Heart right ventricle (tissue), 16 donors: ENCODE measurements at regions of chr11 and their contacts with region 1.

Region 1: DNA sequence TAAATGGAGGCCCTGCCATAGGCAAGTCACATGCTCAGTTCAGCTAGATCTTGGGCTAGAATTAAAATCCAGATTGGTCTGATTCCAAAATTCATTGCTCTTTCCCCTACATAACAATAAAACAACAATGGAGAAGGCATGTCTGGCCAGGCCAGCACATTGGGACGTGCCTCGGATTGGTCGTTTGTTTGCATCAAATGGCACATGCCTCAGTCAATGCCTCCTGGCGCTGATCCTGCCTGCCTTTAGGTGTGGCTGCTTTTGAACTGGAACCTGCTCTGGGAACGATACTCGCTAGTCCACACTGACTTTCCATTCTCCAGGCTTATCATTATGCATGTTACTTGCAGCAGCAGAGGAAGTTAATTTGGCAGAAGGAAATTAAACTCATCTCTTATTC is 322.1 kb downstream of the NELL1 start:
- DNase-seq: no peak
- ATAC-seq: no peak
- H3K4me3 ChIP-seq: no peak overlapping the region
- H3K27ac ChIP-seq: no peak overlapping the region
- H3K4me1 ChIP-seq: no peaks in the 10 kb centered on the region
- H3K27me3 ChIP-seq: peaks cover 0 to 5% (median 0%) of the 10 kb centered on the region in 7 donors
- CTCF ChIP-seq: no peak

Region 2: GRCh38 chr11:20327377-20327935 is 664.0 kb before region 1 on chr11:
- intact Hi-C with region 1: no loop called
- DNase-seq: no peak
- ATAC-seq: no peak
- H3K4me3 ChIP-seq: no peak overlapping the region
- H3K27ac ChIP-seq: no peak overlapping the region
- H3K4me1 ChIP-seq: no peaks in the 10 kb centered on the region
- H3K27me3 ChIP-seq: peaks cover 0 to 17% (median 2%) of the 10 kb centered on the region in 7 donors
- CTCF ChIP-seq: no peak

Region 3: GRCh38 chr11:22879630-22880029 is 1888.2 kb after region 1 on chr11:
- intact Hi-C with region 1: loop called in 1 of 10 experiments (anchors 10 kb)
- DNase-seq: no peak
- ATAC-seq: no peak
- H3K4me3 ChIP-seq: no peak overlapping the region
- H3K27ac ChIP-seq: no peak overlapping the region
- H3K4me1 ChIP-seq: peaks cover 0 to 4% (median 0%) of the 10 kb centered on the region in 9 donors
- H3K27me3 ChIP-seq: no peaks in the 10 kb centered on the region
- CTCF ChIP-seq: no peak